ENCODE measurements at regions of chrX and their contacts with region 1.

Region 1: DNA sequence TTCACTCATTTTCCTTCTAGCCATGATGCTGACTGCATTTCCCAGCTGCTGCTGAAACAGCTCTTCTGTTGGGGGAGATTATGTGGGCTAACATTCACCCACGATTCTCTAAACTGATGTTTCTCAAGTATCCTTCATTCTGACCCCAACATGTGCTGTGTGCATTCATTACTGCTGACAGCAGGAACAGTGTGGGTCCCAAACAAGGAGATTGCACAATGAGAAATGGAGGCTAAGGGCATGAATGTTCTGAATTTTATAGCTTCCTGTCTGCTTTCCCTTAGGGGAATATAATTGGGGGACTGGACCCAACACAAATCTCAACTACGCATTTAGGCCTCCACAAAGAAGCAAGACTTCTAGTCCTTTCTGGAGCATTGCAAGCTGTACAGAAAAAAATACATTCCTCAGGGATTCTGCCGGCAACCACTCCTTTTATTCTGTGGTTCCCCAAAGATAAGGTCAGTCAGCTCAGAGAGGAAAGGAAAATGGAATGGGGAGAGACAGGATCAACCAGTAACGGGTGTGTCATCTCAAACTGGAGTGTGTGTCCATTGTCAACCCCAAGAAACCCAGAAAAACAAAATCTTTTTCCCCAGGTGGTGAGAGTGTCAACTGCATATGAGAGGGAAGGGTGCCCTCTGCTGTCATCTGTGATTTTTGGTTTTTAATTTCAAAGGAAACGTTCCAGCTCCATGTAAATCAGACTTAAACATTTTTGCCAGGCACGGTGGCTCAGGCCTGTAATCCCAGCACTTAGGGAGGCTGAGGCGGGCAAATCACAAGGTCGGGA is 81.5 kb upstream of the EGFL6 start:
- DNase-seq: peak; percentile 50
- ATAC-seq: peak; percentile 86
- H3K4me3 Mint-ChIP-seq: no peak overlapping the region
- H3K27ac Mint-ChIP-seq: peak overlapping the region; percentile 74
- H3K4me1 Mint-ChIP-seq: peaks cover 18% of the 10 kb centered on the region
- H3K27me3 Mint-ChIP-seq: no peaks in the 10 kb centered on the region

Region 2: DNA sequence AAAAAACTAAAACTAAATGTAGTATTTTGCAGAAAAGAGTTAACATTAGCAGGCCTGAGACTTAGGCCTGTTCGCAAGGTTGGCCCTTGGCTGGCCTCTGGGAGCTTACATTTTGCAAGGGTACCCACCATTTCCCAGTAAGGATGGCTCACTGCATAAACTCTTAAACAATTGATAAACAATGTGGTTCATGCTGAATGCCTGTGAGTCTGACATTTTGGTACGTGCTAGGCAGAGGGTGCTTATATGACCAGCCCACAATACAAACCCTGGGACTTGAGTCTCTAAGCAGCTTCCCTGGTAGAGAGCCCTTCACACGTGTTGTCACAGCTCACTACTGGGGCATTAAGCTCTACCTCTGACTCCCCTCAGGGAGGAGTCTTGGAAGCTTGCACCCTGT is 689.3 kb before region 1 on chrX:
- CTCF ChIA-PET with region 1: no interaction called
- POLR2A ChIA-PET with region 1: no interaction called
- intact Hi-C with region 1: no loop called
- DNase-seq: no peak
- ATAC-seq: no peak
- H3K4me3 Mint-ChIP-seq: no peak overlapping the region
- H3K27ac Mint-ChIP-seq: no peak overlapping the region
- H3K4me1 Mint-ChIP-seq: peaks cover 31% of the 10 kb centered on the region
- H3K27me3 Mint-ChIP-seq: no peaks in the 10 kb centered on the region

Region 3: GRCh38 chrX:12894074-12895030 is 593.6 kb before region 1 on chrX:
- CTCF ChIA-PET with region 1: no interaction called
- POLR2A ChIA-PET with region 1: no interaction called
- intact Hi-C with region 1: no loop called
- DNase-seq: peak; percentile 67
- ATAC-seq: peak; percentile 28
- H3K4me3 Mint-ChIP-seq: no peak overlapping the region
- H3K27ac Mint-ChIP-seq: no peak overlapping the region
- H3K4me1 Mint-ChIP-seq: peaks cover 34% of the 10 kb centered on the region
- H3K27me3 Mint-ChIP-seq: no peaks in the 10 kb centered on the region

Region 4: GRCh38 chrX:13376857-13377549 is 110.9 kb before region 1 on chrX:
- CTCF ChIA-PET with region 1: interaction called, 3 read pairs
- POLR2A ChIA-PET with region 1: no interaction called
- intact Hi-C with region 1: loop called (anchors 5 to 10 kb)
- DNase-seq: peak; percentile 32
- ATAC-seq: peak; percentile 52
- H3K4me3 Mint-ChIP-seq: no peak overlapping the region
- H3K27ac Mint-ChIP-seq: peak overlapping the region; percentile 7
- H3K4me1 Mint-ChIP-seq: peaks cover 30% of the 10 kb centered on the region
- H3K27me3 Mint-ChIP-seq: no peaks in the 10 kb centered on the region

Region 5: GRCh38 chrX:13387666-13388494 is 100.0 kb before region 1 on chrX:
- CTCF ChIA-PET with region 1: no interaction called
- POLR2A ChIA-PET with region 1: no interaction called
- intact Hi-C with region 1: loop called in 1 of 2 experiments (anchors 10 kb)
- DNase-seq: peak; percentile 14
- ATAC-seq: peak; percentile 88
- H3K4me3 Mint-ChIP-seq: no peak overlapping the region
- H3K27ac Mint-ChIP-seq: no peak overlapping the region
- H3K4me1 Mint-ChIP-seq: peaks cover 3% of the 10 kb centered on the region
- H3K27me3 Mint-ChIP-seq: no peaks in the 10 kb centered on the region